ENCODE measurements at regions of chr2 and their contacts with region 1.

Region 1: DNA sequence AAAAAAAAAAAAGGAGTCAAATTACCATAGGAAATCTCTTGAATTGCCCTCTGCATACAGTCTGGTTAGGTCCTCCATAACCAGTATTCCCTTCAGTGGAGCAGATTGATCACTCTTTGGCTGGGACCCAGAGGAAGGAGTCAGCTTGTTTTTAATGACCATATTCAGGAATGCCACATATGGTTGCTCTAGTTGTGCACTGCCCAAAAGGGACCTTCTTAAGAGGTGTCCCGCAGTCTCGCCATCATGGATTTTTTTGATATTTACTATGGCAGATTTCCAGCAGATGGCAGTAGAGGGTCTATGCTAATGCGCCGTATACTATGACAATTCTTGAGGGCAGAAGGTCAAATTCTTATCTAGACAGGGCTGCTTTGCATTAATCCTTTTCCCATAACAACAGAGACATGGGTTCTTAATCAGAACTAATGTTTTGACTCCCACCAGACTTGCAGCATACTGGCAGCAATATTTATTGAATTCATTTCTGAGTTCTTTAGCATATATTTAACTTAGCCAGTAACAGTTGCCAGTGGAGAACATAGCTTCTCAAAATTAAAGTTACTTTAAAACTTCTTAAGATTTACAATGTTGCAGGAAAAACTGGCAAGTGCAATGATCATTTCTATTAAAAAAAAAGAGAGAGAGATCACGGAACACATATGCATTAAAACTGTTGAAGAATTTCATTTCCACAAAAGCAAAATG is 31.8 kb upstream of the INPP4A start:
- DNase-seq: peak; percentile 60
- H3K4me3 Mint-ChIP-seq: no peak overlapping the region
- H3K27ac Mint-ChIP-seq: no peak overlapping the region
- H3K4me1 Mint-ChIP-seq: peaks cover 8% of the 10 kb centered on the region
- H3K27me3 Mint-ChIP-seq: peaks cover 11% of the 10 kb centered on the region

Region 2: GRCh38 chr2:98396745-98397355 is 16.1 kb before region 1 on chr2:
- CTCF ChIA-PET with region 1: no interaction called
- POLR2A ChIA-PET with region 1: no interaction called
- DNase-seq: no peak
- H3K4me3 Mint-ChIP-seq: no peak overlapping the region
- H3K27ac Mint-ChIP-seq: no peak overlapping the region
- H3K4me1 Mint-ChIP-seq: peaks cover 3% of the 10 kb centered on the region
- H3K27me3 Mint-ChIP-seq: peaks cover 45% of the 10 kb centered on the region

Region 3: DNA sequence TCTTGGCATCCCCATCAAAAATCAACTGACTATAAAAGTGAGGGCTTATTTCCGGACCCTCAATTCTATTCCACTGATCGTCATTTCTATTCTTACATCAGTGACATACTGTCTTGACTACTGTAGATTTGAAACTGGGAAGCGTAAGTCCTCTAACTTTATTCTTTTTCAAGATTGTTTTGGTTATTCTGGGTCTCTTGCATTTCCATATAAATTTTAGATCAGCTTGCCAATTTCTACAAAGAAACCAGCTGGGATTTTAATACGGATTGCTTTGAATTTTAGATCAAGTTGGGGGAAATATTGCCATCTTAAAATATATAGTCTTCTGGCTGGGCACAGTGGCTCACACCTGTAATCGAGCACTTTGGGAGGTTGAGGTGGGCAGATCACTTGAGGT is 13.9 kb after region 1 on chr2:
- CTCF ChIA-PET with region 1: interaction called, 12 read pairs
- POLR2A ChIA-PET with region 1: interaction called, 3 read pairs
- DNase-seq: no peak
- H3K4me3 Mint-ChIP-seq: no peak overlapping the region
- H3K27ac Mint-ChIP-seq: no peak overlapping the region
- H3K4me1 Mint-ChIP-seq: no peaks in the 10 kb centered on the region
- H3K27me3 Mint-ChIP-seq: peaks cover 5% of the 10 kb centered on the region

Measured in activated CD4-positive, alpha-beta memory T cell treated with anti-CD3 and anti-CD28 coated beads, Interleukin-2, amount 10 ng/mL, durations not matched to agents 7 days and 5 days (primary cell).